ENCODE measurements at regions of chr2 and their contacts with region 1.

Region 1: DNA sequence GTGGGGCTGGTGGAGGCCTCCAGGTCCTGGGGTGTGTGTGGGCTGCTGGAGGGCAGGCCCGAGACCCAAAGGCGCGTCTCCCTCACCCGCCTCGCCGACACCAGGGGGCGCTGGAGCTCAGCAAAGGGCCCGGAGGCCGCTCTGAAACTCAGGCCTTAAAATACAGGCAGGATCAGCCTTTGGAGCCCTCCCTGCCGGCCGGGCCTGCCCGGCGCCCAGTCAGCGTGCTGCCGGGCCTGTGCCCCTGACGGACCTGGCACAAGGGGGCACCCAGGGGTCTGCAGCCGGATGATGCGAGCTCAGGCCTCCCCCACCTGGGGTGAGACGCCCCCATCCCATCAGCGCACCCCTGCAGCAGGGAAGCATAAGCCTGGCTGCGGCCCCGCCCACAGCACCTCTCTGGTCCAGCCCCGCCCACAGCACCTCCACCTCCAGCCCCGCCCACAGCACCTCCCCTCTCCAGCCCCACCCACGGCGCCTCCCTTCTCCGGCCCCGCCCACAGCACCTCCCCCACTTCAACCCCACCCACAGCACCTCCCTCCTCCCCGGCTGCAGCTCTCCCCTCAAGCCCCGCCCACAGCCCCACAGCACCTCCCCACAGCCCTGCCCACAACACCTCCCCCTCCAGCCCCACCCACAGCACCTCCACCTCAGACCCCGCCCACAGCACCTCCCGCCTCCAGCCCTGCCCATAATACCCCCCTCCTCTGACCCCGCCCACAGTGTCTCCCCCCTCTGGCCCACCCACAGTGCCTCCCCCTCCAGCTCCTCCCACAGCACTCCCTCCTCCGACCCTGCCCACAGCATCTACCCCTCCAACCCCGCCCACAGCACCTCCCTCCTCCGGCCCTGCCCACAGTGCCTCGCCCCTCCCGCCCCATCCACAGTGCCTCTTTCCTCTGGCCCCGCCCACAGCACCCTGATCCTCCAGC is 92.8 kb upstream of the OTOS start:
- DNase-seq: peak; percentile 96
- H3K4me3 ChIP-seq: peak overlapping the region; percentile 31 to 43
- H3K27ac ChIP-seq: peak overlapping the region in 1 of 2 donors; percentile 31
- H3K4me1 ChIP-seq: peaks cover 24% of the 10 kb centered on the region
- H3K27me3 ChIP-seq: no peaks in the 10 kb centered on the region
- CTCF ChIP-seq: peak; percentile 93 to 97 (median 94)
- POLR2A ChIP-seq: no peak

Region 2: DNA sequence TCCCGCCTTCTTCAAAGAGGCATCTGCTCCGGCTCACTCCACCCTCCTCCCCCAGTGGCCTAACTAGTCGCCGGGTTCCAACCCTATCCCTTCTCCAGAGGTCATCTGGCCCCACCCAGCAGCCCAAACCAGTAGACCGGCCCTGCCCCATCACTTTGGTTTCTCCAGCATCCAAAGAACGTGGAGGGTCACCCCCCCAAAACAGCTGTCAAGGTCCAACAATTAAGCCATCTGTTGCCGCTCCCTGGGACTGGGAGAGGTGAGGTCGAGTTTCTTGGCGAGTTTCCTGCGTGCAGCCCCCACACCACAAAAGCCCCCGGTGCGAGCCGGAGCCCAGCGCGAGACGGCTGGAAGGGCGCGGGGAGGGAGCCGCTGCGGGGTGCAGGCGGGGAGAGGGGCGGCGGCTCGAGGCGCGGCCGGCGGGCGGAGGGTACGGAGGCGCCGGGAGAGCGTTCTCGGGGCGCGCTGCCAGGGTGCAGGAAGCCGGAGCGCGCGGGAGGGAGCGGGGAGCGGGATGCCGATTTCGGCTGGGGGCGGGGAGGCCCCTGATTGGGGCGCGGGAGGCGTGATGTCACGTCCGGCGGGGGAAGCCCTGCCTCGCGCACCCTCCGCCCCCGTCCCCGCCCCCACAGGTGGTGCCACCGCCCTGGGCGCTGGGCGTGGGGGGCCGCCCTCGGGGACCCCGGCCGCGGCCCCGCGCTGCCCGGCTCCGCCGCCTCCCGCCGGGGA is 201.7 kb after region 1 on chr2:
- intact Hi-C with region 1: loop called (anchors 5 kb)
- DNase-seq: peak; percentile 93
- H3K4me3 ChIP-seq: peak overlapping the region; percentile 65 to 80
- H3K27ac ChIP-seq: peak overlapping the region in 1 of 2 donors; percentile 88
- H3K4me1 ChIP-seq: peaks cover 23% of the 10 kb centered on the region
- H3K27me3 ChIP-seq: no peaks in the 10 kb centered on the region
- CTCF ChIP-seq: no peak
- POLR2A ChIP-seq: no peak